H1 (cell line): ENCODE measurements at regions of chr14 and their contacts with region 1.

Region 1: DNA sequence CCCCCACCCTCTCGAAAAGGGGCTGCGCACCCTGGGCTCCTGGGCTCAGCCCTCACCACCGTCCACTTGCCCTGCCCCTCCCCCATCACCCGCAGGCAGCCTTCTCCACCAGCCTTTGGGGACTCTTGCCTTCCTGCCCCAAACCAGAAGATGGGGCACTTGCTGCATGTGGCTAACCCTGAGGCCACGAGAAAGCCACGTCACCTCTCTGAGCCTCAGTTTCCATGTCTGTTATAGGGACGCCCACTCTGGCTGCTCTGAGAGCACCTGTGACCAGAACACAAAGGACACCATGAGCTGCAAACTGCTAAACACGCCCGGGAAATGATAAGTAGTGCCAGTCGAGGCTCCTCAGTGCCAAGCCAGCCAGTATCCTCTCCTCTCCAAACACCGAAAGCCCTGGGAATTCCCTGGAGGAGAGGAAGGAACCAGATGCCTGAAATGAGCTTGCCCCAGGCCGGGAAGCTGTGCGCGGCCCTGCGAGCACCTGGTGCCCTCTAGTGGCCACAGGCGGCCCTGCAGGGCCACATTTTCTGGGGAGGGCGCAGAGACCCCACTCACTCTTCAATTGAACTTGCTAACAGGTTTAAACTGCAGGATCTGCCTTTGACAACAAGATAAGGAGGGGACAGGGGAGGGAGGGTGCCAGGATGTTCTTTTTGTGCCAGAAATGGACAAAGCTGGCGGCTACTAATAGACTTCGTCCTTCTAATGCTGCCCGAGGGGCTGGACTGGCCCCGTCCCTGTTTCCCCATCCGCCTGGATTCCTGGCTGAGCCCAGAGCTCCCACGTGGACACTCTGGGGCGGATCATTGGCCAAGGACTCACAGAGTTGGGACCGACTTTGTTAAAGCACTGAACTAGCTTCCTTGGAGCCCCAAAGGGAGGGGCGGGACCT is 10.2 kb upstream of the SERPINA9 start:
- DNase-seq: peak; percentile 59 to 94
- H3K4me3 ChIP-seq: peak overlapping the region in 3 of 4 experiments; percentile 20 to 55 (median 43); a peak in 6 of 8 replicates
- H3K27ac ChIP-seq: no peak overlapping the region; the same call in 1 of the 2 replicates
- H3K4me1 ChIP-seq: peaks cover 0 to 14% (median 11%) of the 10 kb centered on the region in 4 experiments; a peak in 6 of 7 replicates
- H3K27me3 ChIP-seq: no peaks in the 10 kb centered on the region
- CTCF ChIP-seq: peak; percentile 93 to 96 (median 96)
- EP300 ChIP-seq: no peak
- POLR2A ChIP-seq: no peak
- RAD21 ChIP-seq: peak; percentile 92 to 94

Region 2: DNA sequence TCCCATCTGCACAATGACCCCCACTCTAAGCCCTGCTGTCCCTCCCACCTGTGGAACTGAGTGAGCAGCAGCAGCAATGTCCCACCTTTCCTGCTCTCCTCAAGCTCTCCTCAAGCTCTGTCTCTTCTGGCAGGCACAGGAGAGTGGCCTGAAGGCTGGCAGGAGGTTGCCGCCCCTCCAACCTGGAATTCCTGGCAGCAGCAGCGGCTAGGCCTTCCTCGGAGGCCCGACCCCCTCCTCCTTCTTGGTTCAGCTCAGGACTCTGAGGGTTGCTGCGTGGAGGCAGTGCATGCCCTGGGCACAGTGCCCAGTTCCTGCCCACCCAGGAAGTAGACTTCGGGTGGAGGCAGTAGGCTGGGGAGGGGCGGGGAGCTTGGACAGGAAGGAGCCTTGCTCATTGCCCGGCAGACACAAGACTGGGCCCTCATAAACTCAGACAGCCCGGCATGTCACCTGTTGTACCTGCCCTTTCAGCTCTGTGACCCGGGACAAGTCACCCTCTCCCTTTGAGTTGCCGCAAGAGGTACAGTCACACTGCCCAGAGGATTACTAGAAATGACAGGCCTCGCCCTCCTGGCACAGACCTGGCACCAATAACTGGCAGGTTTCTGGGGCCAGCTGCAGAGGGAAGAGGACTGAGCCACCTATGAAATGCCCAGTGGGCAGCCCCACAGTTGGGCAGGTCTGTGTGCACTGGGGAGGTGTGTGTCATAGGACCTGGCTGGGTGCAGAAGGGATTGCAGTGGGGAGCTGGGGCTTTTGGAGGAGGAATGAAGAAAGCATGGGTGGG is 95.6 kb before region 1 on chr14:
- CTCF ChIA-PET with region 1: no interaction called
- POLR2A ChIA-PET with region 1: no interaction called
- DNase-seq: no peak
- H3K4me3 ChIP-seq: no peak overlapping the region
- H3K27ac ChIP-seq: no peak overlapping the region
- H3K4me1 ChIP-seq: peaks cover 0 to 16% (median 7%) of the 10 kb centered on the region in 4 experiments; a peak in 5 of 7 replicates
- H3K27me3 ChIP-seq: no peaks in the 10 kb centered on the region; a peak in 1 of 7 replicates
- CTCF ChIP-seq: no peak
- EP300 ChIP-seq: no peak
- POLR2A ChIP-seq: no peak
- RAD21 ChIP-seq: no peak

Region 3: GRCh38 chr14:94428610-94429009 is 57.6 kb before region 1 on chr14:
- CTCF ChIA-PET with region 1: interaction called, 78 read pairs
- POLR2A ChIA-PET with region 1: interaction called, 4 read pairs
- DNase-seq: no peak
- H3K4me3 ChIP-seq: no peak overlapping the region
- H3K27ac ChIP-seq: no peak overlapping the region
- H3K4me1 ChIP-seq: 0 out of 7 replicates have a peak, but pooled peaks cover 0 to 2% (median 0%) of the 10 kb centered on the region in 4 experiments
- H3K27me3 ChIP-seq: no peaks in the 10 kb centered on the region
- CTCF ChIP-seq: no peak
- EP300 ChIP-seq: no peak
- POLR2A ChIP-seq: no peak
- RAD21 ChIP-seq: no peak

Region 4: DNA sequence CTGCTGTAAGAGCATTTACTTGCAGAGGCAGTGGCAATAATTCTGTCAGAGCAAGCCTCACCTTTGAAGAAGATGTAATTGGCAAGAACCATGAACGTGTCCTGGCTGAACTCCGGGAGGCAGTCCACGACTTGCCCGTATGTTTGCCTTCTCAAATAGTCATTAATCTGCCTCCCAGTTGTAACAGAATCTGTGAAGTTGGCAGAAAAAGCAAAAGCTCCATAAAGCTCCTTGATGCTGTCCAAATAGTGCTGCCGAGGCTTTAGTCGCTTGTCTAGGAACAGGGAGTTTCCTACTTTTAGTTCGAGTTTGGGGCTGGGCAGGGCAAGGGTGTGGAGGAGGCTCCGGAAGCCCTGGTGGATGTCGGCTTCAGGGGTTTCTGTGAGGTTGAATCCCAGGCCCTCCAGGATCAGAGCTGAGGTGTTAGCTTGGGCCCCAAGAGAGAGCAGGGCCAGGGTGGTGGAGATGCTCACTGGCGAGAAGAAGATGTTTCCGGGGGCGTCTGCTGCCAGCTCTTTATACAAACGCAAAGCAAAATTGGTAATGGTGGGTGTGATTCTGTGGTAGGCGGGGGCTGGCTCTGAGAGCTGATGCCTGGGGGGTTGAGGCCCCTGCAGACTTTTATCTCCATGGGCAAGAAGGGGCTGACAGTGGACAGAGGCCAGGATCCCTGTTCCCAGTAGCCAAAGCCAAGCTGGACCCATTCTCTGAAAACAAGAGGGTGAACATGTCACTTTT is 38.0 kb before region 1 on chr14:
- CTCF ChIA-PET with region 1: interaction called, 20 read pairs
- POLR2A ChIA-PET with region 1: interaction called, 8 read pairs
- DNase-seq: no peak
- H3K4me3 ChIP-seq: no peak overlapping the region
- H3K27ac ChIP-seq: no peak overlapping the region
- H3K4me1 ChIP-seq: peaks cover 10 to 27% (median 19%) of the 10 kb centered on the region in 4 experiments
- H3K27me3 ChIP-seq: no peaks in the 10 kb centered on the region; a peak in 2 of 7 replicates
- CTCF ChIP-seq: no peak
- EP300 ChIP-seq: no peak
- POLR2A ChIP-seq: no peak
- RAD21 ChIP-seq: no peak

Region 5: GRCh38 chr14:94466706-94467370 is 19.4 kb before region 1 on chr14:
- CTCF ChIA-PET with region 1: interaction called, 27 read pairs
- POLR2A ChIA-PET with region 1: interaction called, 3 read pairs
- DNase-seq: no peak
- H3K4me3 ChIP-seq: no peak overlapping the region
- H3K27ac ChIP-seq: no peak overlapping the region
- H3K4me1 ChIP-seq: no peaks in the 10 kb centered on the region
- H3K27me3 ChIP-seq: no peaks in the 10 kb centered on the region
- CTCF ChIP-seq: no peak
- EP300 ChIP-seq: no peak
- POLR2A ChIP-seq: no peak
- RAD21 ChIP-seq: no peak

Region 6: DNA sequence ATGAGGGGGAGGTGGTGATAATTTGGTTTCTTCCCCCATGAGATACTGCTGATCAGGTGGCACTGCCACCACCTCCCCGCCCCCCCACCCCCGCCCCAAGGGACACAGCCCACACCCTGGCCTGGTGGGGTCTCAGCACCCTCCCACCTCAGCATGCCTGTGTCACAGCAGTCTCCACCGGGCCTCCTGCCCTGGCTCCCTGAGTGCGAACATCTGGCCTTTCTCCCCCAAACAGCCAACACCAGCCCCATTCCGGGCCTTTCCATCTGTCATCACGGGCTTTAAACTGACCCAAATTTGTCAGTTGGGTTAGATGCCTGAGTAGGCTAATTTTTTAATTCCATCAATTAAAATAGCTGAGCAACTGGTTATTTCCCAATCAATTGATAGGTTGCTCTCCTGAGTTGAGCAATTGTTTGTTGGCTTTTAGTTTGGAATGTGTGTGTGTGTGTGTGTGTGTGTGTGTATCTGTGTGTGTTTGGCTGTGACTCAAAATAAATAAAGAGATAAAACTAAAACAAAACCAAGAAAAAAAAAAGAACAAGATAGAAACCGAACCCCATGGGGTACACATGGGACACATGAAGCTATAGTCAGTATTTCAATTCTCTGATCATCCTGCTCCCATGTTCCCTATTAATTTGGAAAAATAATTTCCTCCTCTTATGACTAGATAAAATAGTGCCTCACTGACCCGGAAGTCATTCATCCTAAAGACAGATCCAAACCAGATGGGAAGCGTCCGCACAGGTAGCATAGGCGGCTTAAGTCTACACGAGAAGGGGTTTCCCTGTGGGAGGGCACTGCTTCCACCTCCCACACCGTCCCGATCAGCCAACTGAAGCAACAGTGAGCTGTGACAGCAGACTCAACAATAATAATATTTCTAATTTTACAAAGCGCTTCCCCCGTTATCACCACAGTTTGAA is 15.7 kb after region 1 on chr14:
- CTCF ChIA-PET with region 1: interaction called, 20 read pairs
- POLR2A ChIA-PET with region 1: no interaction called
- DNase-seq: no peak
- H3K4me3 ChIP-seq: no peak overlapping the region
- H3K27ac ChIP-seq: no peak overlapping the region
- H3K4me1 ChIP-seq: no peaks in the 10 kb centered on the region
- H3K27me3 ChIP-seq: no peaks in the 10 kb centered on the region; a peak in 1 of 7 replicates
- CTCF ChIP-seq: no peak
- EP300 ChIP-seq: no peak
- POLR2A ChIP-seq: no peak
- RAD21 ChIP-seq: no peak

Region 7: GRCh38 chr14:94536823-94537222 is 50.6 kb after region 1 on chr14:
- CTCF ChIA-PET with region 1: interaction called, 56 read pairs
- POLR2A ChIA-PET with region 1: no interaction called
- DNase-seq: no peak
- H3K4me3 ChIP-seq: no peak overlapping the region
- H3K27ac ChIP-seq: no peak overlapping the region
- H3K4me1 ChIP-seq: peaks cover 0 to 2% (median 0%) of the 10 kb centered on the region in 4 experiments; a peak in 2 of 7 replicates
- H3K27me3 ChIP-seq: peaks cover 0 to 3% (median 0%) of the 10 kb centered on the region in 4 experiments; a peak in 1 of 7 replicates
- CTCF ChIP-seq: peak in 2 of 3 experiments; percentile 33 to 50; a peak in 3 of 4 replicates
- EP300 ChIP-seq: no peak
- POLR2A ChIP-seq: no peak
- RAD21 ChIP-seq: peak; percentile 47 to 63